Dorsolateral prefrontal cortex (tissue), 120 donors: ENCODE measurements at regions of chrX and their contacts with region 1.

Region 1: GRCh38 chrX:15758140-15758539 is 20.1 kb downstream of the CA5B start:
- DNase-seq: no peak
- H3K4me3 ChIP-seq: no peak overlapping the region
- H3K27ac ChIP-seq: peak overlapping the region in 1 of 59 donors; percentile 3
- H3K27me3 ChIP-seq: peaks cover 0 to 9% (median 0%) of the 10 kb centered on the region in 45 donors
- CTCF ChIP-seq: no peak

Region 2: GRCh38 chrX:14697451-14697850 is 1060.7 kb before region 1 on chrX:
- intact Hi-C with region 1: no loop called
- DNase-seq: peak in 1 of 10 donors; percentile 27
- H3K4me3 ChIP-seq: no peak overlapping the region
- H3K27ac ChIP-seq: no peak overlapping the region
- H3K27me3 ChIP-seq: peaks cover 0 to 45% (median 4%) of the 10 kb centered on the region in 45 donors
- CTCF ChIP-seq: peak in 39 of 56 donors; percentile 8 to 54 (median 35)

Region 3: GRCh38 chrX:15594371-15594770 is 163.8 kb before region 1 on chrX:
- intact Hi-C with region 1: no loop called
- DNase-seq: no peak
- H3K4me3 ChIP-seq: no peak overlapping the region
- H3K27ac ChIP-seq: no peak overlapping the region
- H3K27me3 ChIP-seq: peaks cover 0 to 87% (median 22%) of the 10 kb centered on the region in 45 donors
- CTCF ChIP-seq: no peak

Region 4: GRCh38 chrX:15737960-15738902 is 19.9 kb before region 1 on chrX and contains the start of gene CA5B:
- intact Hi-C with region 1: loop called in 1 of 2 experiments (anchors 2 kb)
- DNase-seq: peak; percentile 50 to 88 (median 70)
- H3K4me3 ChIP-seq: peak within 1 kb of the TSS; percentile 12 to 70 (median 53)
- H3K27ac ChIP-seq: peak within 1 kb of the TSS in 5 of 59 donors; percentile 7 to 46 (median 39)
- H3K27me3 ChIP-seq: peaks cover 0 to 45% (median 0%) of the 10 kb centered on the region in 45 donors
- CTCF ChIP-seq: no peak
- total RNA-seq, gene CA5B: 11.1 to 38.3 (median 21.2) TPM

Region 5: GRCh38 chrX:15815779-15816437 is 57.8 kb after region 1 on chrX:
- intact Hi-C with region 1: no loop called
- DNase-seq: no peak
- H3K4me3 ChIP-seq: no peak overlapping the region
- H3K27ac ChIP-seq: no peak overlapping the region
- H3K27me3 ChIP-seq: no peaks in the 10 kb centered on the region
- CTCF ChIP-seq: peak in 30 of 56 donors; percentile 9 to 46 (median 22)

Region 6: GRCh38 chrX:16403808-16404207 is 645.7 kb after region 1 on chrX:
- intact Hi-C with region 1: no loop called
- DNase-seq: no peak
- H3K4me3 ChIP-seq: no peak overlapping the region
- H3K27ac ChIP-seq: no peak overlapping the region
- H3K27me3 ChIP-seq: peaks cover 0 to 83% (median 17%) of the 10 kb centered on the region in 45 donors
- CTCF ChIP-seq: no peak